ENCODE measurements at regions of chr17 and their contacts with region 1.

Region 1: DNA sequence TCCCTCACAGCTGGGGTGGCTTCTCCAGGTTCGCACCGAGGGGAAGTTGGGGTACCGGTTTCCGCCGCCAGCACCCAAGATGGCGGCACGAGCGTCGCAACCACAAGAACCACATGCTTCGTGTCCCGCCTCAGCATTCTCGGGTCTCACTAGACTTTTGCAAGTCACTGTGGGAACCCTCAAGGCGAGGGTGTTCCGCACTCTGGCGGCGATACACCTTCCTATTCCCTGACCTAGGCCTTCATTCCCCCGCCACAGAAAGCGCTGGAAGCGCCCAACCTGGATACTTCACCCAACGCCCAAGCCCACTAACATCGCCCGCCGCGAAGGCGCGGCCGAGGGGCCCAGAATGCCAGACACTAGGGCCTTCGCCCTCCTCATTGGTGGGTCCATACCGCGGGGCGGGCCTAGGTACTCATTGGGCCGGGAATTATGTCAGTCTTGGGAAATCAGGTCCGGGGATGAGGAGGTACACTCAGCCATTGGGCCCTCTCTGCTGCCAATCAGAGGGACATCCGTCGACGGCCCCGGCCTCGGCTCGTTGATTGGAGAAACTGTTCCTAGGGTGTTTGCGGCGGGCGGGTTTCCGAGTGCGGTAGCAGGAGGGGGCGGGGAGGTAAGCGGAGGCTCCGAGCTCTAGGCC is at the start of gene NFE2L1:
- DNase-seq: peak; percentile 99
- ATAC-seq: peak; percentile 97
- H3K4me3 Mint-ChIP-seq: peak within 1 kb of the TSS; percentile 88
- H3K27ac Mint-ChIP-seq: peak within 1 kb of the TSS; percentile 96
- H3K4me1 Mint-ChIP-seq: peaks cover 45% of the 10 kb centered on the region
- H3K27me3 Mint-ChIP-seq: no peaks in the 10 kb centered on the region
- total RNA-seq, gene NFE2L1: 100 to 127 TPM

Region 2: GRCh38 chr17:47941236-47941994 is 106.4 kb before region 1 on chr17 and contains the start of gene PNPO:
- CTCF ChIA-PET with region 1: interaction called, 3 read pairs
- POLR2A ChIA-PET with region 1: no interaction called
- intact Hi-C with region 1: loop called in 1 of 2 experiments (anchors 1 kb)
- DNase-seq: peak; percentile 98
- ATAC-seq: peak; percentile 99
- H3K4me3 Mint-ChIP-seq: peak within 1 kb of the TSS; percentile 95
- H3K27ac Mint-ChIP-seq: peak within 1 kb of the TSS; percentile 91
- H3K4me1 Mint-ChIP-seq: peaks cover 64% of the 10 kb centered on the region
- H3K27me3 Mint-ChIP-seq: no peaks in the 10 kb centered on the region
- total RNA-seq, gene PNPO: 29.7 to 41.0 TPM

Region 3: DNA sequence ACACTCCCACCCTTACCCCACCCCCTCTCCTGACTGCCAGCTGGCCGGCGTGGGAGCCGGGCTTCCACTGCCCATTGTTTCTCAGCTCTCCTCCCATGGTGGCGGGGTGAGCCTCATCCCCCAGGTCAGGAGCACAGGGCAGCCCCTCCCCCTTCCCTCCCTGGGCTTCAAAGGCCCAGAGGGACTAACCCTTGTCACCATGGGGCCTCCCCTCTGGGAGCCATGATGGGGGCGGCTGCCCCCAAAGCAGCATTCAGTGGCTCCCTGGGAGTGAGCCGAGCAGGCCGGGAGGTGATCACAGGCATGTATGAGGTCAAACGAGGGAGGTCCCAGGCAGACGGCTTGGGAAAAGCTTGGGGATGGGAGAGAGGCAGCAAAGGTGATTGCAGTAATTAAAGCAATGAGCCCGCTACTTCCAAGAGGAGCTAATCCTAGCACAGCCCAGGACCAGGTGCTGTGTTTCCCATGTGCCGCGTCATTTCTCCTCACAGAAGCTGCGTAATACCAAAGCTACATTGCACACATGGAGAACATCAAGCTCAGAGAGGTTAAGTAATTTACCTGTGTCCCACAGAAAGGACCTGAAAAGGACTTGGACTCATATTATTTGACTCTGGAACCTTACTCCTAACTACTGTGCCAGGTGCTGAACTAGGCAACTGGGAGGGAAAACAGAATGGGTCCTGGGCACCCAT is 52.5 kb before region 1 on chr17:
- CTCF ChIA-PET with region 1: no interaction called
- POLR2A ChIA-PET with region 1: no interaction called
- intact Hi-C with region 1: no loop called
- DNase-seq: no peak
- ATAC-seq: no peak
- H3K4me3 Mint-ChIP-seq: no peak overlapping the region
- H3K27ac Mint-ChIP-seq: no peak overlapping the region
- H3K4me1 Mint-ChIP-seq: peaks cover 3% of the 10 kb centered on the region
- H3K27me3 Mint-ChIP-seq: peaks cover 4% of the 10 kb centered on the region

Region 4: GRCh38 chr17:48037036-48037837 is 10.6 kb before region 1 on chr17 and contains the start of gene COPZ2:
- CTCF ChIA-PET with region 1: interaction called, 32 read pairs
- POLR2A ChIA-PET with region 1: no interaction called
- intact Hi-C with region 1: loop called in 1 of 2 experiments (anchors 1 kb)
- DNase-seq: peak; percentile 80
- ATAC-seq: peak; percentile 97
- H3K4me3 Mint-ChIP-seq: peak within 1 kb of the TSS; percentile 72
- H3K27ac Mint-ChIP-seq: peak within 1 kb of the TSS; percentile 72
- H3K4me1 Mint-ChIP-seq: peaks cover 9% of the 10 kb centered on the region
- H3K27me3 Mint-ChIP-seq: peaks cover 33% of the 10 kb centered on the region
- total RNA-seq, gene COPZ2: 3.6 to 4.1 TPM

Region 5: DNA sequence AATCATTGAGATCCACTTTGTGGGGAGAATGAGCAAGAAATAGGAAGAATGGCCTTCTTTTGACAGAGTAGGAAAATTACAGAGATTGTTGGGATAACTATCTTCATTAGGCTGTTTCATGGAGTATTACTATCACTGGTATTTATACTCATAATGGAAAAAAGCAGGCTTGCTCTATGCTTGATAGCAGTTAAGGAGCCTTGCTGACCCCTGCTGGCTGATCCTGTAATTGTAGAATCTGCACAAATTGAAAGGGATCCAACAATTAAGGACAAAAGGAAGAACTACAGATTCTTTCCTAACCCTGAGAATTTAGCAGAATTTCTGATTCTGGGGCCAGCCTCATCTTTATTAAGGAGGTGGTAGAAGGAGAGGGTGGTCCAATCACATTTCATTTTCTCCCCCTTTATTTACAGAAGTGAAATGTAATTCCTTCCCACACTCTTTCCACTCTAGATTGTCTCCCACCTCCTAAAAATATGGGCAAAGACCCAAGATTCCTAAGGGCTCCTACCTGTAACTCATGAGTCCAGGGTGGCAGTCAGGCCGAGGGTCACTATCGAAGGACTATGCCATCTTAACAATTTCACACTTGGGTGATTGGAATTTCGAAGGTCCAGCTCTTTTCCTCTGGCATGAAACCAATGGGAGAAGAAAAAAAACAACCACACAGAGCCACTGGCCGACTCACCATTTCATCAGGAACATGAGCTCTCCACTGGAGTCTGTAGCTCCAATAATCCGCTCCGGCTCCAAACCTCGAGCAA is 26.6 kb after region 1 on chr17:
- CTCF ChIA-PET with region 1: interaction called, 17 read pairs
- POLR2A ChIA-PET with region 1: interaction called, 4 read pairs
- intact Hi-C with region 1: no loop called
- DNase-seq: peak; percentile 86
- ATAC-seq: peak; percentile 75
- H3K4me3 Mint-ChIP-seq: no peak overlapping the region
- H3K27ac Mint-ChIP-seq: no peak overlapping the region
- H3K4me1 Mint-ChIP-seq: no peaks in the 10 kb centered on the region
- H3K27me3 Mint-ChIP-seq: no peaks in the 10 kb centered on the region

Region 6: DNA sequence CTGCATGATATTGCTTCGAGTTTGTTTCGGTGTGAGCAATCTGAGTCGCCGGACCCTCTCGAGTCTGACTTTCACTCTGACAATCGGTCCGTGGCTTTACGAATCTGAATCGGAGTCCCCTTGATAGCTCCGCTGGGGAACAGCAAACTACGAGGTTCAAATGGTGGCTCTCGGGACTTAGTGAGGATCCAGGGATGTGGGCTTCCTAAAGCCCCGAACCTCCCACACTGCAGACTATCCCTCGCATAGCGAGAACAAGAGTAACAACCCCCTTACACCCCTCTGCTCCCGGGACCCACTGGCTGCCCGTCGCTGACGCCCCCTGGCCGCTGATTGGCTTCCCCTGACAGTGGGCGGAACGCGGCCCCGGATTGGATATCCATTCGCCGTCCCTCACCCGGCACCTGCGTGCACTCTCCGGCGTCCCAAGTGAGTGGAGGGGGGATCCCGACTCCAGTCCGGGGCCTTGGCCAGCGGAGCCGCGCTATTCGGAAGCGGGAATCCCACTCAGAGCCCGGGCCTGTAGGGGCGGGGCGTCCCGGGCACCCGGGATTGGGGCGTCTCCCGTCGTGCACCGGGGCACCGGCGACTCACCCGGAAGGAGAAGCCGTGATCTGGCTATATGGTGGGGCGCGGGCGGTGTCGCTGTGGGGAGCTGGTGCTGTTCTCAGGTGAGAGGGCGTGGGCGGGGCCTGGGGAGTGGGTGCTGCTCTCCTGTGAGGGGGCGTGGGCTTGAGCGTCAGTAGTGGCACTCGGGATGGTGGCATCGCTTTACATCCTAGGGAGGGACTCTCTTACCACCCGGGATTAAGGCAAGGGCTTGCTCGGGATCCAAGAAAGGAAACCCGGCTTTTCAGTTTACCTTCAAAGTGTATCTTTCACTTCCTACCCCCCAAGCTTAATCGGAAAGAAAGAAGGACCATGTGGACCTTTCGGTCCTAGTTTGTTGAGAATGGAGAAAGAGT is 59.6 kb after region 1 on chr17 and contains the start of gene SNX11:
- CTCF ChIA-PET with region 1: interaction called, 11 read pairs
- POLR2A ChIA-PET with region 1: interaction called, 3 read pairs
- intact Hi-C with region 1: loop called (anchors 1 kb)
- DNase-seq: peak; percentile 97
- ATAC-seq: peak; percentile 87
- H3K4me3 Mint-ChIP-seq: peak within 1 kb of the TSS; percentile 97
- H3K27ac Mint-ChIP-seq: peak within 1 kb of the TSS; percentile 98
- H3K4me1 Mint-ChIP-seq: peaks cover 61% of the 10 kb centered on the region
- H3K27me3 Mint-ChIP-seq: no peaks in the 10 kb centered on the region
- total RNA-seq, gene SNX11: 18.0 to 21.4 TPM

Measured in activated CD4-positive, alpha-beta T cell treated with anti-CD3 and anti-CD28 coated beads for 36 hours (primary cell).